Caco-2 (cell line): ENCODE measurements at regions of chr4 and their contacts with region 1.

Region 1: GRCh38 chr4:7987148-7987989 is 47.7 kb upstream of the AFAP1 start:
- DNase-seq: peak; percentile 80 to 85
- H3K4me3 ChIP-seq: no peak overlapping the region
- H3K4me3 Mint-ChIP-seq: no peak overlapping the region
- H3K27ac Mint-ChIP-seq: no peak overlapping the region
- H3K4me1 ChIP-seq: 0 out of 2 replicates have a peak, but pooled peaks cover 4% of the 10 kb centered on the region
- H3K4me1 Mint-ChIP-seq: peaks cover 6% of the 10 kb centered on the region
- H3K27me3 ChIP-seq: no peaks in the 10 kb centered on the region
- H3K27me3 Mint-ChIP-seq: no peaks in the 10 kb centered on the region
- CTCF ChIP-seq: peak; percentile 72 to 88

Region 2: GRCh38 chr4:7761720-7762119 is 225.6 kb before region 1 on chr4:
- CTCF ChIA-PET with region 1: no interaction called
- POLR2A ChIA-PET with region 1: no interaction called
- intact Hi-C with region 1: loop called (anchors 1 kb)
- DNase-seq: peak; percentile 62 to 72
- H3K4me3 ChIP-seq: no peak overlapping the region
- H3K4me3 Mint-ChIP-seq: no peak overlapping the region
- H3K27ac Mint-ChIP-seq: peak overlapping the region; percentile 42
- H3K4me1 ChIP-seq: peaks cover 17% of the 10 kb centered on the region
- H3K4me1 Mint-ChIP-seq: no peaks in the 10 kb centered on the region
- H3K27me3 ChIP-seq: no peaks in the 10 kb centered on the region
- H3K27me3 Mint-ChIP-seq: no peaks in the 10 kb centered on the region
- CTCF ChIP-seq: peak; percentile 61 to 67

Region 3: GRCh38 chr4:7843831-7844593 is 143.4 kb before region 1 on chr4:
- CTCF ChIA-PET with region 1: no interaction called
- POLR2A ChIA-PET with region 1: interaction called, 3 read pairs
- intact Hi-C with region 1: loop called (anchors 1 kb)
- DNase-seq: peak; percentile 73 to 79
- H3K4me3 ChIP-seq: no peak overlapping the region
- H3K4me3 Mint-ChIP-seq: no peak overlapping the region
- H3K27ac Mint-ChIP-seq: peak overlapping the region; percentile 25
- H3K4me1 ChIP-seq: peaks cover 6% of the 10 kb centered on the region; the same call in 1 of the 2 replicates
- H3K4me1 Mint-ChIP-seq: no peaks in the 10 kb centered on the region
- H3K27me3 ChIP-seq: no peaks in the 10 kb centered on the region
- H3K27me3 Mint-ChIP-seq: no peaks in the 10 kb centered on the region
- CTCF ChIP-seq: peak; percentile 66 to 71

Region 4: DNA sequence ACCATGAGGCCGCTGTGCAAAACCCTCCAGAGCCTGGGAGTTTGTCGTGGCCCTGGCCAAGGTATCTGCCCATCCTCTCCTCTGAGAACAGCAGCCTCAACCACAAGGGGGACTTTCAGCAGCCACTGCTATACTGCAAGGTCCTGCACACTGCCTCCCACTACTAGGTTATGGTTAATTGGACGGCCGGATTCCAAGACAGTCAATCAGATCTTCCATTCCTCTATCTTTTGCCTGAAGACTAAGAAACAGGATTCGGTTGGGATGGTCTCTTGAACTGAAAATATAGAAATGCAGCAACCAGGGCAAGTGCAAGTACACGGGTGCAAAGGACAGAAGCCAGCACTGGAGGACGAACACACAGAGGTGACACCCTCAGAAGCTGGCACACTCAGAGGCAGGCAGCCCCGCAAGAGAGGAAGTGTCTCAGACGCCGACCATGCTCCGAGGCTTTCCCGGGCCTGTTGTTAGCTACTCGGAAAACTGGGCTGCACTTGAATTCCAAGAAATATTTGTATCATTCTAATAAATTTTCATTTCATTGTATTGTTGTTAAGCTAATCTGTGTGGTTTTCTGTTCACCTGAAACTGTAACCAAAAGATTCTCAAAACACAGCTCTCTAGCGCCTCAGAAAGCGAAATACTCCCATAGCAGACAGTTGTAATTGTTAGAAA is 111.0 kb before region 1 on chr4:
- CTCF ChIA-PET with region 1: interaction called, 3 read pairs
- POLR2A ChIA-PET with region 1: no interaction called
- intact Hi-C with region 1: loop called (anchors 1 kb)
- DNase-seq: peak; percentile 52 to 63
- H3K4me3 ChIP-seq: no peak overlapping the region
- H3K4me3 Mint-ChIP-seq: no peak overlapping the region
- H3K27ac Mint-ChIP-seq: no peak overlapping the region
- H3K4me1 ChIP-seq: peaks cover 4% of the 10 kb centered on the region; the same call in 1 of the 2 replicates
- H3K4me1 Mint-ChIP-seq: peaks cover 15% of the 10 kb centered on the region
- H3K27me3 ChIP-seq: no peaks in the 10 kb centered on the region
- H3K27me3 Mint-ChIP-seq: no peaks in the 10 kb centered on the region
- CTCF ChIP-seq: peak; percentile 28 to 56

Region 5: GRCh38 chr4:7929118-7929951 is 58.0 kb before region 1 on chr4:
- CTCF ChIA-PET with region 1: no interaction called
- POLR2A ChIA-PET with region 1: no interaction called
- intact Hi-C with region 1: no loop called
- DNase-seq: peak; percentile 38 to 47
- H3K4me3 ChIP-seq: no peak overlapping the region
- H3K4me3 Mint-ChIP-seq: no peak overlapping the region
- H3K27ac Mint-ChIP-seq: no peak overlapping the region
- H3K4me1 ChIP-seq: no peaks in the 10 kb centered on the region
- H3K4me1 Mint-ChIP-seq: peaks cover 13% of the 10 kb centered on the region
- H3K27me3 ChIP-seq: no peaks in the 10 kb centered on the region
- H3K27me3 Mint-ChIP-seq: no peaks in the 10 kb centered on the region
- CTCF ChIP-seq: no peak

Region 6: GRCh38 chr4:7939377-7940108 is 47.8 kb before region 1 on chr4 and contains the start of gene AFAP1:
- CTCF ChIA-PET with region 1: no interaction called
- POLR2A ChIA-PET with region 1: interaction called, 3 read pairs
- intact Hi-C with region 1: loop called (anchors 5 kb)
- DNase-seq: peak; percentile 87 to 92
- H3K4me3 ChIP-seq: peak within 1 kb of the TSS; percentile 93
- H3K4me3 Mint-ChIP-seq: peak within 1 kb of the TSS; percentile 81
- H3K27ac Mint-ChIP-seq: peak within 1 kb of the TSS; percentile 93
- H3K4me1 ChIP-seq: peaks cover 37% of the 10 kb centered on the region
- H3K4me1 Mint-ChIP-seq: peaks cover 42% of the 10 kb centered on the region
- H3K27me3 ChIP-seq: no peaks in the 10 kb centered on the region
- H3K27me3 Mint-ChIP-seq: no peaks in the 10 kb centered on the region
- CTCF ChIP-seq: no peak
- total RNA-seq, gene AFAP1: 27.3 and 27.6 TPM in 2 replicates